PC-9 (cell line): ENCODE measurements at regions of chr17 and their contacts with region 1.

Region 1: DNA sequence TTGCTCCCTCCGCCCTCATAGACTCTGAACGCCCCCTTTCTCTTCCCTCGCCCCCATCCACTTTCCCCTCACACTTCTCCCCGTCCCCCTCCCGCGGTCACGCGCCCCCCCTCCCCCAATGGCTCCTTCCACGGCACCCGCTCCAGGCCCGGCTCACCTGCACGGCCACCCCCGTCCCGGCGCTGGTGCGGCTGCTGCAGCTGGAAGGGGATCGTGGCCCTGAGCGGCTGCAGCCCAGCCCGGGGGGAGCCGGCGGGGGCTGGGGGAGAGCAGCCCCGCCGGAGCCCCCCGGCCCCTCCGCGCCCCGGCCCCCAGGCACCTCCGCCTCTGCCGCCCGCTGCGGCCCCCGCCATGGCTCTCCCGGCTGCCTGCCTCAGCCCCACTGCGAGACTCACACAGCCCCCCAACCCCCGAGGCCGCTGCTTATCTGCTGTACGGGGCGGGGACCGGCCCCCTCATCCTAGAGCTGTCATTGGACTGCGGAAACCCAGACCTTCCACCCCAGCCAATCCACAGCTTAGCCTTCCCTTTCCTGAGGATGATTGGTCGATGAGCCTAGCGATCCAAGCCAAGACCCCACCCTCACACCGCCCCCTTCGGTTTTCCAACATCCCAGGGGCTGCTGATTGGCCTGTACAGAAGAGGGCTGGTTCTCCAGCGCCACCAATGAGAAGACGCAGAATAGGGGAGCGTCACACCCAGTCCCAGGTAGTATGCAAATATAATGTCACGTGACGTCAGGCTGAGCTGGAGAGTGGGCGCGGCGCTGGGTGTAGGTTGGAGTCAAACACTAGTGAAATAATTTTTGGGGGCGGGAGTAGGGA is at the start of gene FAM117A:
- DNase-seq: peak; percentile 97 to 99
- H3K4me3 ChIP-seq: peak within 1 kb of the TSS; percentile 54
- H3K27ac ChIP-seq: no peak within 1 kb of the TSS
- H3K4me1 ChIP-seq: peaks cover 4% of the 10 kb centered on the region; the same call in 1 of the 2 replicates
- H3K27me3 ChIP-seq: no peaks in the 10 kb centered on the region
- CTCF ChIP-seq: no peak; the same call in 1 of the 2 replicates
- total RNA-seq, gene FAM117A: 12.7 and 15.0 TPM in 2 replicates

Region 2: GRCh38 chr17:49788478-49789242 is 24.7 kb after region 1 on chr17 and contains the start of gene KAT7:
- CTCF ChIA-PET with region 1: no interaction called
- POLR2A ChIA-PET with region 1: interaction called, 19 read pairs
- intact Hi-C with region 1: loop called (anchors 1 kb)
- DNase-seq: peak; percentile 98 to 99
- H3K4me3 ChIP-seq: peak within 1 kb of the TSS; percentile 88
- H3K27ac ChIP-seq: peak within 1 kb of the TSS; percentile 91
- H3K4me1 ChIP-seq: peaks cover 24% of the 10 kb centered on the region
- H3K27me3 ChIP-seq: no peaks in the 10 kb centered on the region
- CTCF ChIP-seq: 0 out of 2 replicates have a peak, but pooled peaks have one; percentile 19
- total RNA-seq, gene KAT7: 41.6 and 57.0 TPM in 2 replicates